CD4-positive, alpha-beta memory T cell (primary cell): ENCODE measurements at regions of chr6 and their contacts with region 1.

Region 1: GRCh38 chr6:150813319-150813992 is 52.0 kb upstream of the MTHFD1L start:
- DNase-seq: peak in 1 of 5 donors; percentile 44
- H3K4me3 ChIP-seq: no peak overlapping the region
- H3K4me3 Mint-ChIP-seq: no peak overlapping the region
- H3K27ac ChIP-seq: no peak overlapping the region
- H3K27ac Mint-ChIP-seq: peak overlapping the region in 4 of 7 donors; percentile 6 to 58 (median 28)
- H3K4me1 ChIP-seq: no peaks in the 10 kb centered on the region
- H3K4me1 Mint-ChIP-seq: peaks cover 0 to 15% (median 5%) of the 10 kb centered on the region in 4 donors
- H3K27me3 ChIP-seq: no peaks in the 10 kb centered on the region
- H3K27me3 Mint-ChIP-seq: peaks cover 3 to 7% of the 10 kb centered on the region in 2 donors

Region 2: GRCh38 chr6:149934249-149935156 is 879.0 kb before region 1 on chr6:
- CTCF ChIA-PET with region 1: no interaction called
- POLR2A ChIA-PET with region 1: no interaction called
- intact Hi-C with region 1: loop called (anchors 1 kb)
- DNase-seq: peak; percentile 72 to 80 (median 72)
- H3K4me3 ChIP-seq: no peak overlapping the region
- H3K4me3 Mint-ChIP-seq: peak overlapping the region in 2 of 8 donors; percentile 1 to 21
- H3K27ac ChIP-seq: no peak overlapping the region
- H3K27ac Mint-ChIP-seq: peak overlapping the region in 6 of 7 donors; percentile 1 to 67 (median 41)
- H3K4me1 ChIP-seq: peaks cover 15% of the 10 kb centered on the region
- H3K4me1 Mint-ChIP-seq: peaks cover 8 to 37% (median 12%) of the 10 kb centered on the region in 4 donors
- H3K27me3 ChIP-seq: peaks cover 70% of the 10 kb centered on the region
- H3K27me3 Mint-ChIP-seq: peaks cover 75 to 76% of the 10 kb centered on the region in 2 donors

Region 3: GRCh38 chr6:150079604-150080003 is 733.9 kb before region 1 on chr6:
- CTCF ChIA-PET with region 1: interaction called, 33 read pairs
- POLR2A ChIA-PET with region 1: interaction called, 3 read pairs
- intact Hi-C with region 1: loop called (anchors 1 kb)
- DNase-seq: peak; percentile 55 to 67 (median 58)
- H3K4me3 ChIP-seq: no peak overlapping the region
- H3K4me3 Mint-ChIP-seq: peak overlapping the region; percentile 14 to 81 (median 68)
- H3K27ac ChIP-seq: no peak overlapping the region
- H3K27ac Mint-ChIP-seq: peak overlapping the region in 6 of 7 donors; percentile 25 to 86 (median 69)
- H3K4me1 ChIP-seq: peaks cover 23% of the 10 kb centered on the region
- H3K4me1 Mint-ChIP-seq: peaks cover 14 to 26% (median 23%) of the 10 kb centered on the region in 4 donors
- H3K27me3 ChIP-seq: no peaks in the 10 kb centered on the region
- H3K27me3 Mint-ChIP-seq: peaks cover 10 to 22% of the 10 kb centered on the region in 2 donors

Region 4: GRCh38 chr6:150417899-150418826 is 395.3 kb before region 1 on chr6:
- CTCF ChIA-PET with region 1: interaction called, 188 read pairs
- POLR2A ChIA-PET with region 1: interaction called, 3 read pairs
- intact Hi-C with region 1: loop called (anchors 1 kb)
- DNase-seq: peak; percentile 44 to 53 (median 51)
- H3K4me3 ChIP-seq: peak overlapping the region; percentile 8 to 25
- H3K4me3 Mint-ChIP-seq: peak overlapping the region; percentile 69 to 89 (median 78)
- H3K27ac ChIP-seq: no peak overlapping the region
- H3K27ac Mint-ChIP-seq: peak overlapping the region in 2 of 7 donors; percentile 0 to 19
- H3K4me1 ChIP-seq: peaks cover 9% of the 10 kb centered on the region
- H3K4me1 Mint-ChIP-seq: peaks cover 4 to 22% (median 14%) of the 10 kb centered on the region in 4 donors
- H3K27me3 ChIP-seq: no peaks in the 10 kb centered on the region
- H3K27me3 Mint-ChIP-seq: peaks cover 12 to 21% of the 10 kb centered on the region in 2 donors

Region 5: DNA sequence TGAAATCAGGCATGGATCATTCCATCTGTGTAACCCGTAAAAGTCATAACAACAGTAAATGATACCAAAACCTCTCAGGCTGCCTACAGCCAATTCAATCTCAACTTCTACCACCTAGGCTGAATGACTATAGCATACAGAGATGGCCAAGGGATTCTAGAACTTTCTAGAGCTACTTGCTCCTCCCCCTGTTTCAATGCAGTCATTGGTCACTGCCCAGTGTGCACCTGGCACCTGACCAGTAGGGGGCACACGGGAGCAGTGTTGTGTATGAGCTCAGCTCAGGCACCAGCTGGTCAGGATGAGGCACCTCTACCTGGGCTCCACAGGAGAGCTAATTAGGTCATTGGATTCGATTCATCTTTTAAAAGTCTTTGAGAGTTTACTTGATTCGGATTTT is 127.6 kb before region 1 on chr6:
- CTCF ChIA-PET with region 1: interaction called, 6 read pairs
- POLR2A ChIA-PET with region 1: no interaction called
- intact Hi-C with region 1: loop called (anchors 1 kb)
- DNase-seq: peak in 3 of 5 donors; percentile 10 to 21 (median 10)
- H3K4me3 ChIP-seq: no peak overlapping the region
- H3K4me3 Mint-ChIP-seq: no peak overlapping the region
- H3K27ac ChIP-seq: no peak overlapping the region
- H3K27ac Mint-ChIP-seq: no peak overlapping the region
- H3K4me1 ChIP-seq: no peaks in the 10 kb centered on the region
- H3K4me1 Mint-ChIP-seq: no peaks in the 10 kb centered on the region
- H3K27me3 ChIP-seq: no peaks in the 10 kb centered on the region
- H3K27me3 Mint-ChIP-seq: no peaks in the 10 kb centered on the region

Region 6: DNA sequence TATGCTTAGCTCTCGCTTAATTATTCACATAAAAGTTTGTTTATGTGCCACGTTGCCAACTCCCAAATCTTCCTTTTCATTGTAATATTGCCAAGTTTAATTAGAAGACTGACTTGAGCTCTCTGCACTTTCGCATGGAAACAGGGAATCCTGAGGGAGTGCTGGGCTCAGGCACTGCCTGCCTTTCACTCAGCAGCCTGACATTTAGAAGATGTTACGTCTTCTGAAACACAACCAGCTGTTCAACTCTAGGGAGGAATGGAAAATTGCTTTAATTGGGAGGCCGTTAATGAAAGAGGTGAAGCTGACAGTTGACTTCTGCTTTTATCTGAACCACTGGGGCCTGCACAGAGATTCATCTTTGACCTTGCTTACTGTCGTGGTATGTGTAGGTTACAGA is 25.4 kb before region 1 on chr6:
- CTCF ChIA-PET with region 1: no interaction called
- POLR2A ChIA-PET with region 1: no interaction called
- intact Hi-C with region 1: no loop called
- DNase-seq: no peak
- H3K4me3 ChIP-seq: no peak overlapping the region
- H3K4me3 Mint-ChIP-seq: no peak overlapping the region
- H3K27ac ChIP-seq: no peak overlapping the region
- H3K27ac Mint-ChIP-seq: no peak overlapping the region
- H3K4me1 ChIP-seq: no peaks in the 10 kb centered on the region
- H3K4me1 Mint-ChIP-seq: no peaks in the 10 kb centered on the region
- H3K27me3 ChIP-seq: no peaks in the 10 kb centered on the region
- H3K27me3 Mint-ChIP-seq: peaks cover 0 to 1% of the 10 kb centered on the region in 2 donors

Region 7: GRCh38 chr6:151205721-151206600 is 392.5 kb after region 1 on chr6:
- CTCF ChIA-PET with region 1: no interaction called
- POLR2A ChIA-PET with region 1: no interaction called
- intact Hi-C with region 1: no loop called
- DNase-seq: no peak
- H3K4me3 ChIP-seq: no peak overlapping the region
- H3K4me3 Mint-ChIP-seq: no peak overlapping the region
- H3K27ac ChIP-seq: no peak overlapping the region
- H3K27ac Mint-ChIP-seq: peak overlapping the region in 1 of 7 donors; percentile 1
- H3K4me1 ChIP-seq: no peaks in the 10 kb centered on the region
- H3K4me1 Mint-ChIP-seq: no peaks in the 10 kb centered on the region
- H3K27me3 ChIP-seq: no peaks in the 10 kb centered on the region
- H3K27me3 Mint-ChIP-seq: peaks cover 8 to 19% of the 10 kb centered on the region in 2 donors